WTC11 (cell line): ENCODE measurements at regions of chr6 and their contacts with region 1.

Region 1: DNA sequence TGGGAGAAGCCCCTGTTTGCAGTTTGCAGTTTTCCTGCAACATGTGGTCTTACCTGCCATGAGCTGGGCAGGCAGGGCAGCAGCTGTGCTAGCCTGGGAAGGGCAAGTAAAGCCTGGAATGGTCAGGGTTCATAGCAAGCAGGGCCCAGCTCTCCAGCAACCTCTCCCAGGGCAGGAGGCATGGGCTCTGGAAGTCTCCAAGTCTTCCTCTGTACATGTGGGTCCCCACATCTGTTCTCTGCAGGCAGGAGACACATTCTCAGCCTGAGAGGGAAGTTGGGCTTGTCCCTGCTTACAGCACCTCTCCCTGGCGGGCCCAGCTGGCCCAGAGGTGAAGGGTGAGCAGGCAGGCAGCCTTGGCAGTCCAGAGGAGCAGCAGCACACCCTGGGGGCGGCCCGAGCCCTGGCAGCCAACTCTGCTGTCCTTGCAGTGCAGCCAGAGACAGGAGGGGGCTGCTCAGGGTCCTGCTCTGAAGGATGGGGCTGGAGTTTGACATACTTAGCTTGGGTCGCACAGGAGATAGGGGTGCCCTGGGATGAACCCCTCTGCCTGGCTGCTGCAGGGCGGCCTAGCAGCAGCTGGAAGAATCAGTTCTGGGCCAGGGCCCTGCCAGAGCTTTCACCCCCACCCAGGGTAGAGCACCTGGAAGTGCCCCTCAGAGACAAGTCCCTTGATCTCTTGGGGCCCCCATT is 176.0 kb downstream of the MRPL14 start:
- DNase-seq: peak; percentile 90
- ATAC-seq: peak; percentile 95
- H3K4me3 Mint-ChIP-seq: no peak overlapping the region
- H3K27ac Mint-ChIP-seq: no peak overlapping the region
- H3K4me1 Mint-ChIP-seq: peaks cover 4% of the 10 kb centered on the region
- H3K27me3 Mint-ChIP-seq: no peaks in the 10 kb centered on the region
- CTCF ChIP-seq: no peak; the same call in none of the 2 replicates

Region 2: DNA sequence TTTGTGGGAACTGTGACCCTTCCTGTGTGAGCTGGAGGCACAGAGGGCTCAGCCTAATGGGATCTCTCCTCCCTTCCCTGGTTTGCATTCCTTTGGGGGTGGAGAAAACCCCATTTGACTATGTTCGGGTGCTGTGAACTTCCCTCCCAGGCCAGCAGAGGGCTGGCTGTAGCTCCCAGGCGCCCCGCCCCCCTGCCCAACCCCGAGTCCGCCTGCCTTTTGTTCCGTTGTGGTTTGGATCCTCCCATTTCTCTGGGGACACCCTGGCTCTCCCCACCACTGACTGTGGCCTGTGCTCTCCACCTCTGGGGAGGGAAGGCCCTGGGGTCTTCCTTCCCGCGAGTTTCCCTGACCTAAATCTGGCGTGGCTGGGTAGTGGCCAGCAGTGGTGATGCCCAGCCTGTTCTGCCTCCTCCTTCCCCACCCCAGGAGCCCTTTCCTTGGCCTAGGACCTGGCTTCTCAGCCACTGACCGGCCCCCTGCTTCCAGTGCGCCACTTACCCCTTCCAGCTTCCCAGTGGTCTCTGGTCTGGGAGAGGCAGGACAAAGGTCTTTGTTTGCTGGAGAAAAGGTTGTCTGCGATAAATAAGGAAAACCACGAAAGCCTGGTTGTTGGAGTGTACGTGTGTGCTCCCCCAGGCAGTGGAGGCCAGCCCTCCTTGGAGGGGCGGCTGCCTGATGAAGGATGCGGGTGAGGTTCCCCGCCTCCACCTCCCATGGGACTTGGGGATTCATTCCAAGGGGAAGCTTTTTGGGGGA is 176.3 kb before region 1 on chr6:
- CTCF ChIA-PET with region 1: interaction called, 77 read pairs
- POLR2A ChIA-PET with region 1: interaction called, 8 read pairs
- DNase-seq: peak; percentile 85
- ATAC-seq: peak; percentile 46
- H3K4me3 Mint-ChIP-seq: peak overlapping the region; percentile 48
- H3K27ac Mint-ChIP-seq: peak overlapping the region; percentile 82
- H3K4me1 Mint-ChIP-seq: peaks cover 33% of the 10 kb centered on the region
- H3K27me3 Mint-ChIP-seq: peaks cover 2% of the 10 kb centered on the region; the same call in 1 of the 2 replicates
- CTCF ChIP-seq: peak; percentile 82

Region 3: GRCh38 chr6:43891072-43891870 is 59.9 kb before region 1 on chr6:
- CTCF ChIA-PET with region 1: interaction called, 10 read pairs
- POLR2A ChIA-PET with region 1: no interaction called
- DNase-seq: peak; percentile 35
- ATAC-seq: peak; percentile 38
- H3K4me3 Mint-ChIP-seq: peak overlapping the region; percentile 37
- H3K27ac Mint-ChIP-seq: no peak overlapping the region
- H3K4me1 Mint-ChIP-seq: peaks cover 18% of the 10 kb centered on the region
- H3K27me3 Mint-ChIP-seq: peaks cover 11% of the 10 kb centered on the region
- CTCF ChIP-seq: no peak

Region 4: DNA sequence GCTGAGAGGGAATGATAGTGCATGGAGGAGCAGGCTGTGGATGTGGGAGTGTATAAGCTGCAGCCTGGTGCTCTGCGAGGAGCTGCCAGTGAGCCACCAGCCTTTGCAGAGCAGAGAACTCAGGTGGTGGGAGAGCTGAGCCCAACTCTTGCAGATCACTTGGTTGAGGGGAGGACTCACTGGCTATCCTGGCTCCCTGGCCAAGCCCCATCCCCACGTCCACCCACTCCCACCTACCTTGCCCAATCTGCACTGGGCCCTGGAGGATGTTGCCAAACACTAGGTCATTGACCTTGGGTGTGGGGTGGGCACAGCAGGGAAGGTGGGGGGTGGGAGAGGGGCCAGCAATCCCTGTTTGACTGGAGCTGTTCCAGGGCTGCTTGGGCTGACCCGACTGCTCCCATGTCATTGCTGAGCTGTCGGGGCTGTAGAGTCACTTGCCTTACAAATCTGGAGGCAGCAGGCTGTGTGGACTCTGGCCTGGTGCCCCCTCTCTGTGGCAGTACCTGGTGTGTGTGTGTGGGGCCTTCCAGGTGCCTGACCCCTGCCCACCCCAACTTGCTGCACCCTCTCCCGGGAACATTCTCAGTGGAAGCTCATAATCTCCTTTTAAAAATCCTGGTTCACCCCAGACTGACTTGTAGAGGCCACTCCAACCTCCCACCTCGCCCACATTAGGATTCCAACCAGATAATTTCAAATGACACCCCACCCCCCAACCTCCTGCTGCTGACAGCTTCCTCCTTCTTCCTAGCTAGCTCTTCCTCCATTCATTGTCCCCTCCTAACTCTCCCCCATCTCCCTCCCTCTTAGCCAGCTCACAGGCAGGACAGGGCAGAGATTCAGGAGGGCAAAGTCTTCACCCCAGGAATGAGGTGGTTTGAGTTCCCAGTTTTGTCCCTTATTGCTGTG is 13.7 kb after region 1 on chr6:
- CTCF ChIA-PET with region 1: interaction called, 15 read pairs
- POLR2A ChIA-PET with region 1: no interaction called
- DNase-seq: no peak
- ATAC-seq: peak; percentile 25; the same call in 1 of the 2 replicates
- H3K4me3 Mint-ChIP-seq: no peak overlapping the region
- H3K27ac Mint-ChIP-seq: no peak overlapping the region
- H3K4me1 Mint-ChIP-seq: peaks cover 21% of the 10 kb centered on the region
- H3K27me3 Mint-ChIP-seq: no peaks in the 10 kb centered on the region
- CTCF ChIP-seq: no peak

Region 5: DNA sequence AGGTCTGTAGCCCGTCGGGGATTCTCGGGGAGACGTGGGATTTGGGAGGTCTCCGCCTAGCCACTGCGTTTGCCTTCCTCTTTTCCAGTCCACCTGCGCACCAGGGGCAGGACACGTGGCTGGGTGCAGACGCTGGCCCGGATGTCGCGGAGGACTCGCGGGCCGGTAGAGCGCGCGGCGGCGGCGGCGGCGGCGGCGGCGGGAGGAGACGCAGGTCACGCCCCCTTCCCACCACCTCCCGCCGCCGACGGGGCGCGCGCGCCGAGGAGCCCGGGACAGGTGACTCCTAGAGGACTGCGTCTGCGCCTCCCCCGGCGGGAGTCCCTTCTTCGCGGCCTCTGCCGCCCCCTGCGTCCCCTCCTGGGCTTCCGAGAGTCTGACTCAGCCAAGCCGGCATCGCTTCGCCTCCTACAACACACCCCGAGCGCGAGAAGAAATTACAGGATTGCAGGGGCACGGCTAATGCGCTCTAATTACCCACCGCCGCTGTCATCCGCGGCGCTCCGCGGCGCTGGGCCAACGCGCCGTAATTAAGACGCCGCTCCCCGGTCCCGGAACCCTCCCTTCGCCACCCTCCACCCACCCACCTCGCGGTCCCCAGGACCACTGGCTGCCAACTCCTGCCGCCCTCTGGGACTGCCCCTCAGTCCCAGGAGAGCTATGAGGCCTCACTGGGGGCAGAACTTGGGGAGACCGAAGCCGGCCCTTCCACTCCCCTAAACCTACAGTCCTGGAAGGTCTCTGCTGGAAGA is 51.6 kb after region 1 on chr6:
- CTCF ChIA-PET with region 1: interaction called, 15 read pairs
- POLR2A ChIA-PET with region 1: no interaction called
- DNase-seq: peak; percentile 78
- ATAC-seq: peak; percentile 12
- H3K4me3 Mint-ChIP-seq: peak overlapping the region; percentile 69
- H3K27ac Mint-ChIP-seq: no peak overlapping the region
- H3K4me1 Mint-ChIP-seq: peaks cover 66% of the 10 kb centered on the region
- H3K27me3 Mint-ChIP-seq: peaks cover 37% of the 10 kb centered on the region
- CTCF ChIP-seq: no peak